Heart right ventricle (tissue), 16 donors: ENCODE measurements at regions of chr6 and their contacts with region 1.

Region 1: GRCh38 chr6:56808871-56809359 is 146.0 kb upstream of the BEND6 start:
- DNase-seq: no peak
- ATAC-seq: peak; percentile 22 to 79 (median 50)
- H3K4me3 ChIP-seq: no peak overlapping the region
- H3K27ac ChIP-seq: peak overlapping the region in 7 of 10 donors; percentile 21 to 68 (median 52)
- H3K4me1 ChIP-seq: peaks cover 4 to 75% (median 48%) of the 10 kb centered on the region in 9 donors
- H3K27me3 ChIP-seq: no peaks in the 10 kb centered on the region
- CTCF ChIP-seq: no peak

Region 2: GRCh38 chr6:56764081-56764566 is 44.8 kb before region 1 on chr6:
- intact Hi-C with region 1: loop called in 1 of 10 experiments (anchors 5 kb)
- DNase-seq: no peak
- ATAC-seq: peak in 7 of 8 donors; percentile 23 to 75 (median 66)
- H3K4me3 ChIP-seq: no peak overlapping the region
- H3K27ac ChIP-seq: peak overlapping the region in 2 of 10 donors; percentile 1 to 27
- H3K4me1 ChIP-seq: peaks cover 3 to 58% (median 37%) of the 10 kb centered on the region in 9 donors
- H3K27me3 ChIP-seq: no peaks in the 10 kb centered on the region
- CTCF ChIP-seq: peak in 6 of 9 donors; percentile 16 to 48 (median 41)